Endothelial cell of umbilical vein (primary cell): ENCODE measurements at regions of chr4 and their contacts with region 1.

Region 1: GRCh38 chr4:98728433-98728832 is 70.0 kb upstream of the TSPAN5 start:
- DNase-seq: peak; percentile 96
- H3K4me3 ChIP-seq: peak overlapping the region in 1 of 3 experiments; percentile 7
- H3K27ac ChIP-seq: peak overlapping the region; percentile 72
- H3K4me1 ChIP-seq: peaks cover 18% of the 10 kb centered on the region
- H3K27me3 ChIP-seq: no peaks in the 10 kb centered on the region
- CTCF ChIP-seq: peak in 1 of 2 donors; percentile 0
- POLR2A ChIP-seq: no peak

Region 2: DNA sequence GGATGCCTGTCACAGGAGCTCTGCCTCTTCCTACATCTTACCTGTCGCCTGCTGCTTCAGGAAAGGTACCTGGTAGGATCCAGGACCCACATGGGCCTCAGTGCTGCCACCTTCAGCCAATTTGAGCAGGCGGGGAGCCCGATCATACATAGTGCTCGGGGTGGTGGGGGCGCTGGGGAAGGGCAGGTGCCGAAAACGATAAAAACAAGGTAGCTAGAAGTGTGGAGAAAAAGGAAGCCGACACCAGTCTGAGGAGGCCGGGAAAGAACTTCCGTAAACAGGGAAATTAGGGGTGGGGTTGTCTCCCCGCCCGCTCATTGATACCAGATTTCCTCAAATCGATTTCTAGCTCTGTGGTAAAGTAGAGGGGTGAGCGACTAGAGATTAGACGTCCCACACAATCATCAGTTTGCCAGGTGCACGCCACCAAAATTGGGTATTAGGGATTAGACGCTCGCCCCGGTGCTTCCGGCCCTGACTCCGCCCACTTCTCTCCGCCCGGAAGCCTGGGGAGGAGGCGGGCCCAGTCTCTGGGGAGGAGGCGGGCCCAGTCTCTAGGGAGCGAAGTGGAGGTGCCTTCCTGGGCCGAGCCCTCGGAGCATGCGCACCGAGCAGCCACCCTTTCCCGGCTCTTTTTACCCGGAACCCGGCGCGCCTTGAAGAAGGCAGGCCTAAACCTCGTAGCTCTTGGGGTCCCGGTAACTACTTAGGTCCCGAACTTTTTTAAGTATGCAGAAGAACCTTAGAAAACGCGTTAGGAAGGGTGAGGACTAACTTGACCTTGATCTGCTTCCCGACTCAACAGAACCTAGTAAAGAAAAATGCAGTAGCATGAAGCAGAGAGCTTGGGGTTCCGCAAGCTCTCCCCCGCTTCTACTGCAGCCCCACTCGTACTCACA is 585.2 kb before region 1 on chr4 and contains the start of gene STPG2:
- CTCF ChIA-PET with region 1: no interaction called
- POLR2A ChIA-PET with region 1: no interaction called
- dilution Hi-C with region 1: no loop called
- intact Hi-C with region 1: loop called (anchors 2 kb)
- DNase-seq: peak; percentile 87
- H3K4me3 ChIP-seq: peak within 1 kb of the TSS; percentile 62 to 88 (median 71)
- H3K27ac ChIP-seq: peak within 1 kb of the TSS; percentile 71
- H3K4me1 ChIP-seq: peaks cover 5% of the 10 kb centered on the region
- H3K27me3 ChIP-seq: no peaks in the 10 kb centered on the region
- CTCF ChIP-seq: peak; percentile 22 to 59
- POLR2A ChIP-seq: peak; percentile 59
- total RNA-seq, gene STPG2: not detected in 2 replicates

Region 3: GRCh38 chr4:98522636-98523395 is 205.6 kb before region 1 on chr4:
- CTCF ChIA-PET with region 1: no interaction called
- POLR2A ChIA-PET with region 1: no interaction called
- dilution Hi-C with region 1: no loop called
- intact Hi-C with region 1: loop called (anchors 2 kb)
- DNase-seq: peak; percentile 91
- H3K4me3 ChIP-seq: peak overlapping the region in 1 of 3 experiments; percentile 45
- H3K27ac ChIP-seq: peak overlapping the region; percentile 97
- H3K4me1 ChIP-seq: peaks cover 52% of the 10 kb centered on the region
- H3K27me3 ChIP-seq: no peaks in the 10 kb centered on the region
- CTCF ChIP-seq: no peak
- POLR2A ChIP-seq: no peak

Region 4: DNA sequence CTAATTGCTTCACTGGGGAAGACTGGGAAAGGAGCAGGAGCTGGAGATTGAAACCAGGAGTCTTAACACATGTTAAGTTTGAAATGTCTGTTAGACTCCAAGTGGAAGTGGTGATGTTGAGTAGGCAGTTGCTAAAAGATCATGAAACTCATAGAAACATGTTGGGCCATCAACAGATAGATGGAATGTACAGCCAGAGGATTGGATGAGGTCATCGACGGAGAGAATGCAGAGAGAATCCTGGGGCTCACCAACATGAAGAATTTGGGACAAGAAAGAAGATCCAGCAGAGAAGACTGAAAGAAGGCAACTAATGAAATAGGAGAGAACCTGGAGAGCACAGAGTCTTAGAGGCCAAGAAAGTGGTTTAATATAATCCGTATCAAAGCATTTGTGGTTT is 50.6 kb before region 1 on chr4:
- CTCF ChIA-PET with region 1: interaction called, 7 read pairs
- POLR2A ChIA-PET with region 1: no interaction called
- dilution Hi-C with region 1: no loop called
- intact Hi-C with region 1: loop called (anchors 1 kb)
- DNase-seq: no peak
- H3K4me3 ChIP-seq: no peak overlapping the region
- H3K27ac ChIP-seq: no peak overlapping the region
- H3K4me1 ChIP-seq: peaks cover 18% of the 10 kb centered on the region
- H3K27me3 ChIP-seq: no peaks in the 10 kb centered on the region
- CTCF ChIP-seq: no peak
- POLR2A ChIP-seq: no peak

Region 5: GRCh38 chr4:98688411-98689290 is 39.8 kb before region 1 on chr4:
- CTCF ChIA-PET with region 1: interaction called, 16 read pairs
- POLR2A ChIA-PET with region 1: no interaction called
- dilution Hi-C with region 1: no loop called
- intact Hi-C with region 1: loop called (anchors 1 kb)
- DNase-seq: peak; percentile 90
- H3K4me3 ChIP-seq: peak overlapping the region in 1 of 3 experiments; percentile 34
- H3K27ac ChIP-seq: peak overlapping the region; percentile 85
- H3K4me1 ChIP-seq: peaks cover 59% of the 10 kb centered on the region
- H3K27me3 ChIP-seq: no peaks in the 10 kb centered on the region
- CTCF ChIP-seq: no peak
- POLR2A ChIP-seq: no peak

Region 6: DNA sequence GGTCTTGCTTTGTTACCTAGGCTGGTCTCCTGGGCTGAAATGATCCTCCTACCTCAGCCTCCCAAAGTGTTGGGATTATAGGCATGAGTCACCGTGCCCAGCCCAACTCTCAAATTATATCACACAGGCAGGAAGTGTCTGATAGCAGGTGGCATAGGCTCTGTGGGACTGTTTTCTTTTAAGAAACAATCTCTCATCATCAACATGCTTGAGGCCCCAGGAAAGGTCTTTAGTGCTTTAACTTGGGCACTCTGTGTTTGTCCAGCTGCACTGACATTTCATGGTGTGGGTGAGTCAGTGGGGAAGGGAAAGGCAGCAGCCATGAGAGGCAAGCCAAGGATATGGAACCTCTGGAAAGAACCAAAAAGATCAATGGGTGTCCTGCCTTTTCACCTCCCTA is 18.1 kb after region 1 on chr4:
- CTCF ChIA-PET with region 1: interaction called, 5 read pairs
- POLR2A ChIA-PET with region 1: no interaction called
- dilution Hi-C with region 1: no loop called
- intact Hi-C with region 1: loop called (anchors 1 kb)
- DNase-seq: peak; percentile 74
- H3K4me3 ChIP-seq: no peak overlapping the region
- H3K27ac ChIP-seq: peak overlapping the region; percentile 46
- H3K4me1 ChIP-seq: peaks cover 17% of the 10 kb centered on the region
- H3K27me3 ChIP-seq: no peaks in the 10 kb centered on the region
- CTCF ChIP-seq: no peak
- POLR2A ChIP-seq: no peak